ENCODE measurements at regions of chr18 and their contacts with region 1.

Region 1: DNA sequence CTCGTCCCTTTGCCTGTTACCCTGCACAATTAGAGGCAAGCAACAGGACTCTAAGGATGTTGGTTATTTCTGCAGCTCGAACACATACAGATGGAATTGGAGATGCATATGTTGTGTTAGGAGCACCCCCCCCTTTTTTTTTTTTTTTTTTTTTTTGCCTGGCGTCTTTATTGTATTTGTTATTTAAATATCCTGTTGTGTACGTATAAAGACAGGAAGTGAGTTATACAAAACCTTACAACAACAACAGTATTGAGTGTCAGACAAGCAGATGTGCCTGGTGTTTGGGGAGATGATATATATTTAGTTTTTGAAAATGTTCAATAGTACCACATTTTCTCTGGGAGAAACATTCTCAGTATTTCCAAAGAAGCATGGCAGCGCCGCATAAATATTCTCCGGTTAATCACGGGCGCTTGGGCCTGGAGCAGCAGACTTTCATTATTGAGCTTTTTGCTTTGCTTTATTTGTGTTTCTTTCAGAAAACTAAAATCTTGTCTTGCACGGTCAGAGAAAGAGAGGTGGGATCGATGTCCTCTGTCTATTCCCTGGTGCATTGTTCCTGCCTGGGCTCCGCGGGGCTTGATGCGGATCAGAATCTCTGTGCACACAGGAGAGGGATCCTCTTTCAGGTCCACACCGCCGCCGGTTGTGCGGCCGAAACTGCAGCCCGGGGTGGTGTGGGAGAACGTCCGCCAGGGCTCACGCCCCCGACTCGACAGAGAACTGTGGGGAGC is 23.2 kb upstream of the ZNF516 start:
- DNase-seq: peak; percentile 17
- ATAC-seq: no peak
- H3K4me3 Mint-ChIP-seq: peak overlapping the region; percentile 75
- H3K27ac Mint-ChIP-seq: no peak overlapping the region
- H3K4me1 Mint-ChIP-seq: peaks cover 17% of the 10 kb centered on the region
- H3K27me3 Mint-ChIP-seq: peaks cover 14% of the 10 kb centered on the region
- CTCF ChIP-seq: no peak

Region 2: DNA sequence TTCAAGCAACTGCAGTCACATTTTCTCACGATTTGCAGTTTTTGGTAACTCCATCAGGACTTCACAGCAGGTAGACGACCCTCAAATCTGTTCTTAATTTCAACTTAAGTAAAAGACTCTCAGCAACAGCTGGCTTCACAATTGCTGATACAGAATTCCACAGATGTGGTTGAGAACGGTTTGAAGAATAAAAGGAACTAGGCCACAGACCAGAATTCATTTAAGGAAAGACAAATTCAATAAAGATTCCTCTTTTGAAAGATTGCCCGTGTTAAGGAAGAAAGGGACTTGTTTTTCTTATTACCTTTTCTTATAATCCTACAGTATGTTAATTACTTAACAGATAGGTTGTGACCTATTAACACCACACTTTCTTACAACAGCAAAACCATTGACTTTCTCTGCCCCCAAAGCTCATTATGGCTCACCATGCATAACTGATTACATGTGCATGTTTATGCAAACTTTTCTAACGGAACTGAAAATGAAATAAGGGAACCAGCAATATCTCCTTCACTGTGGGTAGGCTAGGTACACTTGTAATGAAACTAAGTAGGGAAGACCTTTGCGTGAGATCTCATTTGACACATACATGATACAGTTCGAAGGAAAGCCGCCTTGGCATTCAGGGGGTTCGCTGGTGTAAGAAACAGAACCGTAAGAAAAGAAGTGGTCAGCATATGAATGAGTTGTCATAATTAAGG is 18.5 kb before region 1 on chr18:
- CTCF ChIA-PET with region 1: no interaction called
- POLR2A ChIA-PET with region 1: no interaction called
- intact Hi-C with region 1: loop called (anchors 2 kb)
- DNase-seq: no peak
- ATAC-seq: peak; percentile 83
- H3K4me3 Mint-ChIP-seq: peak overlapping the region; percentile 65
- H3K27ac Mint-ChIP-seq: peak overlapping the region; percentile 89
- H3K4me1 Mint-ChIP-seq: peaks cover 38% of the 10 kb centered on the region
- H3K27me3 Mint-ChIP-seq: peaks cover 2% of the 10 kb centered on the region
- CTCF ChIP-seq: no peak

Measured in activated B cell treated with CpG ODN at 0.5 μM for 24 hours (primary cell).